ENCODE measurements at regions of chr12 and their contacts with region 1.

Region 1: GRCh38 chr12:102061560-102062418 is at the start of gene WASHC3:
- DNase-seq: peak; percentile 96 to 97 (median 97)
- ATAC-seq: peak; percentile 97 to 100 (median 100)
- H3K4me3 ChIP-seq: peak within 1 kb of the TSS; percentile 60 to 93 (median 86)
- H3K27ac ChIP-seq: peak within 1 kb of the TSS; percentile 61 to 94 (median 89)
- H3K4me1 ChIP-seq: peaks cover 0 to 13% (median 0%) of the 10 kb centered on the region in 12 donors
- H3K27me3 ChIP-seq: no peaks in the 10 kb centered on the region
- CTCF ChIP-seq: no peak
- POLR2A ChIP-seq: peak in 1 of 2 donors; percentile 77
- total RNA-seq, gene WASHC3: 34.8 to 65.5 (median 40.9) TPM

Region 2: DNA sequence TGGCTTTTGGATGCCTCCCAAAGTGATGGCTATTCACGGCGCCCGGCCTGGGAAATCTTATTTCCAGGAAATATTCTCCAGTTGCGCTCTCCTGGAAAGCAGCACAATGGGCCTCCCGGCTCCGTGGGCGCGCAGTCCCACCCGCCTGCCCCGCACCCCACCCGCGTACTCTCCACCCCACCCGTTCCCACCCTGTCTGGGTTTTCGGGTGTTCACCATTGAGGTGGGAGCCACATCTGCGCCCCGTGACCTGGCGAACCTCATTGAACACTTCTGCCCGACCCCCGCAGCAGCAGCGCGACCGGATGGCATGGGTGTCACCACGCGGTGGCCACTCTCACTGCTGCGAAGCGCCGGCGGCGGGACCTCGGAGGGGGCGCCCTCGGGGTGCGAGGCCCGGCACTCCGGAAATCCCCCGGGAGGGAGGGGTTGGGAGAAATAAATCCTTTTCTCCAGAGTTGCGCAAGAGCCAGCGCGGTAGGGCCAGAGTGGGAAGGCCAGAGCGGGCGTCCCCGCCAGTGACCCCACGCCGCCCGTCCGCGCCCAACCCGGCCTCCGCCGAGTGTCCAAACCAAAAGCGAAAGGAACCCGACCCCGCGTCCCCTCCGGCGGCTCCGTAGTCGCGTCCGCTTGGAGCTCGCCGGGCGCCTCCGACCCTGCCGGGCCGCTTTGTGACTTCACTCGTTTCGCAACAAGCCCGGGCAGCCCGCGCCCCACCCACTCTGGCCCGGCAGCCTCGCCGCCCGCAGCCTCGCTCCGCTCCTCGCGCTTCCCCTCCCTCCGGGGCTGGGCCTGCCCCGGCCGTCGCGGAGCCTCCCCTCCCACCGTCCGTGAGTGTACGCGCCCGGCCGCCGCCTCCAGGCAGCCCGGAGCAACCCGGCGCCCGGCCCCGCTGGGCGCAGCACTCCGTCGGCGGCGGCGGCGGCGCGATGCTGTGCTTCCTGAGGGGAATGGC is 184.7 kb before region 1 on chr12 and contains the start of gene DRAM1:
- intact Hi-C with region 1: loop called in 1 of 10 experiments (anchors 5 kb)
- DNase-seq: peak; percentile 89 to 96 (median 92)
- ATAC-seq: peak; percentile 82 to 97 (median 92)
- H3K4me3 ChIP-seq: peak within 1 kb of the TSS; percentile 60 to 95 (median 86)
- H3K27ac ChIP-seq: peak within 1 kb of the TSS; percentile 82 to 99 (median 96)
- H3K4me1 ChIP-seq: peaks cover 0 to 66% (median 11%) of the 10 kb centered on the region in 12 donors
- H3K27me3 ChIP-seq: no peaks in the 10 kb centered on the region
- CTCF ChIP-seq: peak in 4 of 12 donors; percentile 14 to 24 (median 18)
- POLR2A ChIP-seq: peak in 1 of 2 donors; percentile 80
- total RNA-seq, gene DRAM1: 3.7 to 40.7 (median 4.3) TPM

Region 3: DNA sequence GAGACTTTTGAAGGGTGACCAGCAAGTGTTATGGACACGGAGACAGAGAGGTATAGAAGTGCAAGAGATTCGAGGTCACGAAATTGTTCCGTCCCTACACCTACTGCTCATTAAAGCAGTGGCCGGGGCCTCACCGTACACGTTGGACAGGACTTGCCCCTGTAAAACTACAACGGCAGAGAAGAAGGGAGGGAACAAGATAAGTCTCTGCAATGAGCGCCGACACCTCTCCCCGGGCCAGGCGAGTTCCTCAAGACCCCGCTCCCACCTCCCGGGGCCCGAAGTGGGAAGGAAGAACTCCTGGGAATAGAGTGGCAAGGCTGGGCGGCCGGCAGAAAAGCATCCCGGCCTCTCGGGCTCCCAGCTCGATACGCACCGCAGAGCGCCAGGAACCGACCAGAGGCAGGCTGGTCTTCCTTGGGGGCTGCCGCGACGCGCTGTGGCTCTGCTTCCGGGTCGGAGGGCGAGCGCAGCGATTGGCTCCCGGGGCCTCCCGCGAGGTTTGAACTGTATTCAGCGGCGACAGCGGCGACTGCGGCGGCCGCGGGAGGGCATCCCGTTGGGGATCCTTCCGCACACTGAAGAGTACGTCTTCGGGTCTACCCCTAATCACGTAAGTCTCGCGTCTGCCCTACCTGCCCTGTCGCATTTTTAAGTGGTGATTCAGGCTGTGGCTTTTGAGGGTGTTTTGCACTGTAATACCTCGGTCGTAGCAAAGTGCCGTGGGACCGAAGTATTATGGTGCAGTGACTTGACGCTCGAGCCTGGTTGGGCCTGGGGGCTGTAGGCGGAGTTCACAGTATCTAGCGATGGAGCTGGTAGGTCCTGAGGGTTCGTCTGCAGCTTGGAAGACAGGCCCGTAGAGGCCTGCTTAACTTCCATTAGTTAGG is 58.1 kb after region 1 on chr12 and contains the starts of genes NUP37 and PARPBP:
- intact Hi-C with region 1: loop called in 6 of 10 experiments (anchors 2 to 10 kb)
- DNase-seq: peak; percentile 90 to 95 (median 91)
- ATAC-seq: peak; percentile 100
- H3K4me3 ChIP-seq: peak within 1 kb of the TSS; percentile 64 to 90 (median 76)
- H3K27ac ChIP-seq: peak within 1 kb of the TSS; percentile 29 to 90 (median 80)
- H3K4me1 ChIP-seq: peaks cover 0 to 19% (median 14%) of the 10 kb centered on the region in 12 donors
- H3K27me3 ChIP-seq: no peaks in the 10 kb centered on the region
- CTCF ChIP-seq: peak in 3 of 12 donors; percentile 11 to 24 (median 21)
- POLR2A ChIP-seq: peak in 1 of 2 donors; percentile 65
- total RNA-seq, gene NUP37: 7.6 to 26.2 (median 16.1) TPM
- total RNA-seq, gene PARPBP: 0.25 to 2.3 (median 0.49) TPM in 8 of 9 donors, not detected in the other

Measured in heart left ventricle (tissue), 16 donors.